Activated T-helper 2 cell treated with anti-CD3 and anti-CD28 coated beads, Interferon-gamma antibody, Interleukin-2, Interleukin-4, amounts not matched to agents 10 μg/mL and 5 μg/mL and 100 μg/mL, durations not matched to agents 14 hours and 24 hours and 36 hours (primary cell): ENCODE measurements at regions of chr9 and their contacts with region 1.

Region 1: GRCh38 chr9:74277532-74277931 is 219.6 kb upstream of the RORB start:
- DNase-seq: peak; percentile 45
- H3K4me3 Mint-ChIP-seq: no peak overlapping the region
- H3K27ac Mint-ChIP-seq: peak overlapping the region; percentile 48
- H3K4me1 Mint-ChIP-seq: peaks cover 31% of the 10 kb centered on the region
- H3K27me3 Mint-ChIP-seq: no peaks in the 10 kb centered on the region

Region 2: GRCh38 chr9:74125941-74126340 is 151.6 kb before region 1 on chr9:
- intact Hi-C with region 1: loop called (anchors 2 kb)
- DNase-seq: no peak
- H3K4me3 Mint-ChIP-seq: no peak overlapping the region
- H3K27ac Mint-ChIP-seq: no peak overlapping the region
- H3K4me1 Mint-ChIP-seq: peaks cover 15% of the 10 kb centered on the region
- H3K27me3 Mint-ChIP-seq: no peaks in the 10 kb centered on the region

Region 3: DNA sequence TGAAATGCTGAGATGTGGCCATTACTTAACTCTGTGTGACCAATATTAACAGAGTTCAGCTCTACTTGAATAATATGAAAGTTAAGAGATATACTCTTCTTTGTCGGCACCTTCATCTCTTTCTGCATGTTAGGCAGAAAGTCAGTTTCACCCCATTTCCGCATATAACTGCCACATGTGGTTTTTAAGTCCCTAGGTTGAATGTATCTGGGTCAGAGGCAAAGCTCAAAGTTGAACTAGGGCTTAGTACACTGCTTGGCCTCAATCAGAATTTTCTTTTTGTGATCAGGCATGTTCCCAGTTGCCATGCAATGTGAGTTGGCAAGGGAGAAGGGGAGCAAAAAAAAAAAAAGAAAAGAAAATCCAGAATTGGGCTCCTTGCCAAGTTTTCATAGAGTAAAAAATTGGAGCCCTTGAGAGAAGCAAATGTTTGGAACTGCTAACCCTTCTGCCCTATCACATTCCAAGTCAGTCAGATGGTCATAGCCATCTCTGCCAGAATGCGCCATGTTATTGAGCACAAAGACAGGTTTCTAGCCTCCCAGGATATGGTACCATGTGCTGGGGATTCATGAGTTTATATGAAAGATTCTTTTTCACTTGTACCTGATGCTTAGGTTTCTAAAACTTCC is 31.6 kb before region 1 on chr9:
- intact Hi-C with region 1: loop called (anchors 2 kb)
- DNase-seq: peak; percentile 9
- H3K4me3 Mint-ChIP-seq: no peak overlapping the region
- H3K27ac Mint-ChIP-seq: peak overlapping the region; percentile 80
- H3K4me1 Mint-ChIP-seq: peaks cover 22% of the 10 kb centered on the region
- H3K27me3 Mint-ChIP-seq: no peaks in the 10 kb centered on the region

Region 4: GRCh38 chr9:74333384-74334032 is 56.0 kb after region 1 on chr9:
- intact Hi-C with region 1: loop called (anchors 5 kb)
- DNase-seq: no peak
- H3K4me3 Mint-ChIP-seq: no peak overlapping the region
- H3K27ac Mint-ChIP-seq: peak overlapping the region; percentile 23
- H3K4me1 Mint-ChIP-seq: peaks cover 35% of the 10 kb centered on the region
- H3K27me3 Mint-ChIP-seq: peaks cover 4% of the 10 kb centered on the region